ENCODE measurements at regions of chr17 and their contacts with region 1.

Region 1: DNA sequence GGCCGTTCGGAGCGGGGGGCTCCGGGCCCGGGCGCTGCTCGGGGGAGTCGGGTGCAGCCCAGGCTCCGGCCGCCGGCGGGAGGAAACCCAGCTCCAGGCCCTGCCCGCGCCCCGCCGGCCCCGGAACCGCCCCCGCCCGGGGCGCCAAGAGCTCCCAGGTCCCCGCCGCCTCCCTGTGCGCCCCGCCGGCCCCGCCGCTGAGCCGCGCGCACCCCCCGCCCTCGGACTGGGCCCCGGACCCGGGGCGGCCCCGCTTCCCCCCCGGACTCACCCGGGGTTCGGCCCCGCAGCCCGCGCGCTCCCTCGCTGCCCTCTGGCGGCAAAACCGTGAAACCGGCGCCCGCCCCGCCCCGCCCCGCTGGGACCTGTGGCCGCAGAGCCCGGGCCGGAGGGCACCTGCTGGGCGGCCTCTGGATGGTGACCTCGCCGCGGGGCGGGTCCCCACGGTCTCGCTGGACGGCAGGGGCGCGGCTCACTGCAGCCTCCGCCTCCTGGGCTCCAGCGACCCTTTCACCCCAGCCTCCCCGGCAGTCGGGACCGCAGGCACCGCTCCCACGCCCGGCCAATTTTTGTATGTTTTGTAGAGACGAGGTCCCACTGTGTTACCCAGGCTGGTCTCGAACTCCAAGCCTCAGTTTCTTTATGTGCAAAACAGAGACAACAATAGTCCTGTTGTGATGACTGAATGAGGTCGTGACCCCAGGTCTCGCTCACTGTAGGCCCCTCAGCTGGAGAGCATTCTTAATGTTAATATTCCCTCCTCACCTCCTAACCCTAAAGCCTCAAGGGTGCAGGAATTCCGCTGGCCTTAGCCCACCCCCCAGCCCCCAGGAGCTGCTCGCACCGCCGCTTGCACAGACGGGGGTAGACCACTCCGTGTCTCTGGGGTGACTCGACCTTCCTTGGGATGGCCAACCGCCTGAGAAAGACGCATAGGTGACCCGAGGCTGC is 33.6 kb upstream of the RPH3AL start:
- DNase-seq: peak; percentile 77
- ATAC-seq: peak; percentile 92
- H3K4me3 ChIP-seq: peak overlapping the region in 4 of 5 experiments; percentile 21 to 60 (median 38)
- H3K4me3 Mint-ChIP-seq: peak overlapping the region; percentile 89
- H3K27ac ChIP-seq: no peak overlapping the region
- H3K27ac Mint-ChIP-seq: peak overlapping the region; percentile 56
- H3K4me1 ChIP-seq: peaks cover 11 to 12% of the 10 kb centered on the region in 2 donors
- H3K4me1 Mint-ChIP-seq: peaks cover 19% of the 10 kb centered on the region
- H3K27me3 ChIP-seq: peaks cover 0 to 21% (median 2%) of the 10 kb centered on the region in 4 experiments
- H3K27me3 Mint-ChIP-seq: peaks cover 19% of the 10 kb centered on the region
- CTCF ChIP-seq: peak; percentile 63

Region 2: DNA sequence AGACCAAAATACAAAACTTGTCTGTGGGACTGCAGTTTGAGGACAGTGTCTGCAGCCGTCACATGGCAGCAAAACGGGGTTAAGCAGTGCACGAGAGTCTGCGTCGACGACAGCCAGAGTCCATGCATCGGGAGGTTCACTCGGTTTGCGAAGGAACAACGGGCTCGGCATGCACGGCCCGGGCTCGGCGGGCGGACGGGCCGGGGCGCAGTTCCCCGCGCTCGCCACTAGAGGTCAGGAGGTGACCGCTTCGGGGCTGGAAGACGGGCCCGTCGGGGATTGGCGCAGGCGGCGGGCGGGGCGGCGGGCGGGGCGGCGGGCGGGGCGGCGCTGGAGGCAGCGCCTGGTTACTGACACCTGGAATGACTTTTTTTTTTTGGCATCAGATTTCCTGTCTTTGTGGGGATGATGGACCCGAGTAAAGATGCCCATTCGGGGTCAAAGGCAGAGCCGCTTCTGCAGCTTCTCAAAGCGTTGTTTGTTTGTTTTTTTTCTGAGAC is 242.4 kb before region 1 on chr17:
- CTCF ChIA-PET with region 1: no interaction called
- POLR2A ChIA-PET with region 1: no interaction called
- intact Hi-C with region 1: loop called (anchors 2 kb)
- DNase-seq: peak; percentile 82
- ATAC-seq: peak; percentile 99
- H3K4me3 ChIP-seq: no peak overlapping the region
- H3K4me3 Mint-ChIP-seq: no peak overlapping the region
- H3K27ac ChIP-seq: no peak overlapping the region
- H3K27ac Mint-ChIP-seq: no peak overlapping the region
- H3K4me1 ChIP-seq: peaks cover 0 to 3% of the 10 kb centered on the region in 2 donors
- H3K4me1 Mint-ChIP-seq: peaks cover 3% of the 10 kb centered on the region
- H3K27me3 ChIP-seq: no peaks in the 10 kb centered on the region
- H3K27me3 Mint-ChIP-seq: peaks cover 3% of the 10 kb centered on the region
- CTCF ChIP-seq: peak; percentile 89

Region 3: GRCh38 chr17:320809-321653 is 65.2 kb before region 1 on chr17:
- CTCF ChIA-PET with region 1: no interaction called
- POLR2A ChIA-PET with region 1: no interaction called
- intact Hi-C with region 1: no loop called
- DNase-seq: no peak
- ATAC-seq: no peak
- H3K4me3 ChIP-seq: no peak overlapping the region
- H3K4me3 Mint-ChIP-seq: no peak overlapping the region
- H3K27ac ChIP-seq: no peak overlapping the region
- H3K27ac Mint-ChIP-seq: no peak overlapping the region
- H3K4me1 ChIP-seq: no peaks in the 10 kb centered on the region
- H3K4me1 Mint-ChIP-seq: no peaks in the 10 kb centered on the region
- H3K27me3 ChIP-seq: peaks cover 0 to 2% (median 0%) of the 10 kb centered on the region in 4 experiments
- H3K27me3 Mint-ChIP-seq: no peaks in the 10 kb centered on the region
- CTCF ChIP-seq: no peak

Measured in B cell (primary cell).